ENCODE measurements at regions of chr19 and their contacts with region 1.

Region 1: GRCh38 chr19:20661150-20661819 is at the start of gene ZNF626:
- DNase-seq: peak; percentile 97
- ATAC-seq: peak; percentile 99
- H3K4me3 ChIP-seq: peak within 1 kb of the TSS; percentile 61 to 85 (median 77)
- H3K4me3 Mint-ChIP-seq: peak within 1 kb of the TSS; percentile 95
- H3K27ac ChIP-seq: peak within 1 kb of the TSS; percentile 85 to 91
- H3K27ac Mint-ChIP-seq: peak within 1 kb of the TSS; percentile 97
- H3K4me1 ChIP-seq: peaks cover 22 to 33% of the 10 kb centered on the region in 2 donors
- H3K4me1 Mint-ChIP-seq: peaks cover 41% of the 10 kb centered on the region
- H3K27me3 ChIP-seq: no peaks in the 10 kb centered on the region
- H3K27me3 Mint-ChIP-seq: no peaks in the 10 kb centered on the region
- CTCF ChIP-seq: no peak
- total RNA-seq, gene ZNF626: 15.2 and 17.6 TPM in 2 replicates

Region 2: DNA sequence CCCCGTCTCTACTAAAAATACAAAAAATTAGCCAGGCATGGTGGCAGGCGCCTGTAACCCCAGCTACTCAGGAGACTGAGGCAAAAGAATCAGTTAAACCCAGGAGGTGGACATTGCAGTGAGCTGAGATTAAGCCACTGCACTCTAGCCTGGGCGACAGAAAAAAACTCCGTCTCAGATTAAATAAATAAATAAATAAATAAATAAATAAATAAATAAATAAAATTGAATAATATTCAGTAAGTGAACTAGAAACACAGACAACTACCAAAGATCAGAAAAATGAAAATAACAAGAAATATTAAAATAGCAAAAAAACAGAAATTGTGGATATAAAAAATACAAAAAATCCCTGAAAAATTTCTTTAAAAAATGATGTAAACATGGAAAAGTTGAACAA is 321.8 kb before region 1 on chr19:
- CTCF ChIA-PET with region 1: no interaction called
- POLR2A ChIA-PET with region 1: no interaction called
- intact Hi-C with region 1: no loop called
- DNase-seq: no peak
- ATAC-seq: no peak
- H3K4me3 ChIP-seq: no peak overlapping the region
- H3K4me3 Mint-ChIP-seq: no peak overlapping the region
- H3K27ac ChIP-seq: no peak overlapping the region
- H3K27ac Mint-ChIP-seq: no peak overlapping the region
- H3K4me1 ChIP-seq: no peaks in the 10 kb centered on the region
- H3K4me1 Mint-ChIP-seq: no peaks in the 10 kb centered on the region
- H3K27me3 ChIP-seq: no peaks in the 10 kb centered on the region
- H3K27me3 Mint-ChIP-seq: no peaks in the 10 kb centered on the region
- CTCF ChIP-seq: no peak

Region 3: GRCh38 chr19:20367811-20368294 is 293.4 kb before region 1 on chr19:
- CTCF ChIA-PET with region 1: no interaction called
- POLR2A ChIA-PET with region 1: no interaction called
- intact Hi-C with region 1: no loop called
- DNase-seq: no peak
- ATAC-seq: no peak
- H3K4me3 ChIP-seq: no peak overlapping the region
- H3K4me3 Mint-ChIP-seq: no peak overlapping the region
- H3K27ac ChIP-seq: no peak overlapping the region
- H3K27ac Mint-ChIP-seq: no peak overlapping the region
- H3K4me1 ChIP-seq: no peaks in the 10 kb centered on the region
- H3K4me1 Mint-ChIP-seq: no peaks in the 10 kb centered on the region
- H3K27me3 ChIP-seq: no peaks in the 10 kb centered on the region
- H3K27me3 Mint-ChIP-seq: no peaks in the 10 kb centered on the region
- CTCF ChIP-seq: no peak

Region 4: DNA sequence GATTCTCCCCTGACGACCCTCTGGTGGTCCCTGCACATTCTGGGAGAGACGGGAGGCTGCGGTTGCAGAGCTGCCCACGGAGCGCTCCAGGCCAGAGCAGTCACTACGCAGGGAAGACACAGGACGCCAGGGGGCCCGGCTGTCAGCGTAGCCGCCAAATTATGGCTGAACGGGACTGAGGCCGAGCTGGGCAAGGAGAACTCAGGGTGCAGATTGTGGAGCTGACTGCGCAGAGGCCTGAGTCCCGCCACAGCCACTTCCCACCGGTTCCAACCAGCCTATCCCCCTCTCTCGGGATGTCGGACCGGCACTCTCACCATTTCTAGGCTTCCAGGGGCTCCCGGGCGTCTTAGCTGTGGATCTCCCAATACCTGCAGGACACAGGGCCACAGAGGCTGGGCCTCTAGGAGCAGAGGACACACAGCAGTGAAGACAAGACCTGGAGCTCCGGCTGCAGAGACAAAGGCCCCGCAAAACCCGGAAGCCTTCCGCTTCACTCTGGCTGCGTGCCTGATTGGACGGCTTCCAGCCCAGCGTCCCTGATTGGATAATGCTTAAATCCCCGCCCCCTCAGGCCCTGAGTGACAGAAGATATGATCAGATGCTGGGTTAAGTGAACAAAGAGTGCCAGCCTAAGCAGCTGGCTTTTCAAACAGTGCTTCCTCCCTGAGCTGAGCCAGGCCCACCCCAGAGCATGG is 95.8 kb before region 1 on chr19 and contains the start of gene ZNF737:
- CTCF ChIA-PET with region 1: interaction called, 3 read pairs
- POLR2A ChIA-PET with region 1: interaction called, 15 read pairs
- intact Hi-C with region 1: loop called (anchors 1 kb)
- DNase-seq: peak; percentile 93
- ATAC-seq: peak; percentile 92
- H3K4me3 ChIP-seq: peak within 1 kb of the TSS; percentile 38 to 87 (median 80)
- H3K4me3 Mint-ChIP-seq: peak within 1 kb of the TSS; percentile 98
- H3K27ac ChIP-seq: peak within 1 kb of the TSS; percentile 93 to 96
- H3K27ac Mint-ChIP-seq: peak within 1 kb of the TSS; percentile 99
- H3K4me1 ChIP-seq: peaks cover 6 to 15% of the 10 kb centered on the region in 2 donors
- H3K4me1 Mint-ChIP-seq: peaks cover 32% of the 10 kb centered on the region
- H3K27me3 ChIP-seq: no peaks in the 10 kb centered on the region
- H3K27me3 Mint-ChIP-seq: no peaks in the 10 kb centered on the region
- CTCF ChIP-seq: no peak
- total RNA-seq, gene ZNF737: 45.6 and 50.1 TPM in 2 replicates

Region 5: GRCh38 chr19:20776083-20777076 is 115.1 kb after region 1 on chr19 and contains the start of gene ZNF66:
- CTCF ChIA-PET with region 1: no interaction called
- POLR2A ChIA-PET with region 1: interaction called, 3 read pairs
- intact Hi-C with region 1: loop called (anchors 1 kb)
- DNase-seq: peak; percentile 95
- ATAC-seq: peak; percentile 98
- H3K4me3 ChIP-seq: peak within 1 kb of the TSS; percentile 74 to 91 (median 80)
- H3K4me3 Mint-ChIP-seq: peak within 1 kb of the TSS; percentile 97
- H3K27ac ChIP-seq: peak within 1 kb of the TSS; percentile 66 to 90
- H3K27ac Mint-ChIP-seq: peak within 1 kb of the TSS; percentile 91
- H3K4me1 ChIP-seq: peaks cover 0 to 5% of the 10 kb centered on the region in 2 donors
- H3K4me1 Mint-ChIP-seq: peaks cover 29% of the 10 kb centered on the region
- H3K27me3 ChIP-seq: no peaks in the 10 kb centered on the region
- H3K27me3 Mint-ChIP-seq: no peaks in the 10 kb centered on the region
- CTCF ChIP-seq: no peak
- total RNA-seq, gene ZNF66: 25.0 and 27.7 TPM in 2 replicates